GM12878 (cell line): ENCODE measurements at regions of chr10 and their contacts with region 1.

Region 1: DNA sequence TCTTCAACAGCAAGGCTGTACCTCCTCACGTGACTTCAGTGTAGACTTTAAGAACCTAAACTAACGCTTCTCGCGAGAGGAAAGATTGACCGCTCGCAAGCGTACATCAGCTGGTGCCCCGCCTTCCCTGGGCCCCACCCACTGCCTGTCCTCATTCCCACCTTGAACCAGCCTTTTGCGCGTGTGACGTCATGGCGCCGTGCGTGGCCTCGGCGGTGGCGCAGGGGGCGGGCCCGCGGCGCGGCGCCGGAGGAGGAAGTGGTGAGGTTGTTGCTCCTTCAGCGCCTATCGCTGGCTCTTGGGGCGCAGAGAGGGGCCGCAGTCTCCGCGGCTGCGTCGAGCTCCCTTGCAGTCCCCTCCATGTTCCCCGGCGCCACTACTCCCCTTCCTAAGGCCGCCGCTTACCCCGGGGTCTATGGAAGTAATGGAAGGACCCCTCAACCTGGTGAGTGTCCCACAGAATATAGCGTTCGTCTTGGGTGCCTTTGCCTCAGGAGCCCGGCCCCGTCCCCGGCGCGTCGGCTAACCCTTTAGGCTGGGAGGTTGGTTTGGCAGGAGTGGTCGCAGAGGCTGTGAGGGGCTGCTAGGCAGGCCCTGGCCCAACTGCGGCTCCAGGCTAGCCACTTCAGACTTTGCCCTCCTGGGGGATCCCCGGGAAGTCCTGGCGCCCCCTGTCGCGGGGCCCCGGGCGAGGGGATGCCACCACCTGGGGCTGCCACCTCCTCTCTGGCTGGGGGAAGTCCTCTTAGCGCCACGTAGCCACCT is at the start of gene NRBF2:
- DNase-seq: peak; percentile 96
- ATAC-seq: peak; percentile 93
- H3K4me3 ChIP-seq: peak within 1 kb of the TSS; percentile 89
- H3K27ac ChIP-seq: peak within 1 kb of the TSS; percentile 94
- H3K4me1 ChIP-seq: peaks cover 6% of the 10 kb centered on the region
- H3K27me3 ChIP-seq: no peaks in the 10 kb centered on the region
- CTCF ChIP-seq: peak in 2 of 3 experiments; percentile 32 to 42; a peak in 3 of 6 replicates
- EP300 ChIP-seq: no peak
- POLR2A ChIP-seq: peak; percentile 99
- RAD21 ChIP-seq: no peak
- polyA plus RNA-seq, gene NRBF2: 33.2 to 35.0 TPM

Region 2: DNA sequence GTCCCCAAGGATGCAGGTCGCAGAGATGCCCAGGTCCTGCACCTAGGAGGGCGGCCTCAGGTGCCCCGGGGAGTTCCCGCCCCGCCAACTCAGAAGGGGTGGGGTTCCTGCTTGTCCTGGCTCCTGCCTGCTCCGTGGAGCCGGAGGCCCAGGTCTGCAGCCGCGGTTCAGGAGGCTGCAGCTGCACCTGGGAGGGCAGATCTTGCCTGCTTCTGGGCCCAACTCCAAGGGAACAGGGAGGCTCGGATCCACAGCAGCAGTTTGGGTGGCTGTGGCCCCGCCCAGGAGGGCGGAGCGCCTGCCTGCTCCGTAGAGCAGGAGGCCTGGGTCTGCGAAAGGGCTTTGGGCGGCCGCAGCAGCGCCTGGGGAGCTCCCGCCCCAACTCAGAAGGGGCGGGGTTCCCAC is 208.9 kb before region 1 on chr10:
- CTCF ChIA-PET with region 1: no interaction called
- POLR2A ChIA-PET with region 1: no interaction called
- RAD21 ChIA-PET with region 1: no interaction called
- SMC1A ChIA-PET with region 1: no interaction called
- in situ Hi-C with region 1: no loop called
- intact Hi-C with region 1: no loop called
- DNase-seq: no peak
- ATAC-seq: peak; percentile 99
- H3K4me3 ChIP-seq: peak overlapping the region; percentile 49; the same call in 1 of the 2 replicates
- H3K27ac ChIP-seq: no peak overlapping the region
- H3K4me1 ChIP-seq: 0 out of 2 replicates have a peak, but pooled peaks cover 3% of the 10 kb centered on the region
- H3K27me3 ChIP-seq: no peaks in the 10 kb centered on the region
- CTCF ChIP-seq: no peak
- EP300 ChIP-seq: no peak
- POLR2A ChIP-seq: no peak
- RAD21 ChIP-seq: no peak

Region 3: DNA sequence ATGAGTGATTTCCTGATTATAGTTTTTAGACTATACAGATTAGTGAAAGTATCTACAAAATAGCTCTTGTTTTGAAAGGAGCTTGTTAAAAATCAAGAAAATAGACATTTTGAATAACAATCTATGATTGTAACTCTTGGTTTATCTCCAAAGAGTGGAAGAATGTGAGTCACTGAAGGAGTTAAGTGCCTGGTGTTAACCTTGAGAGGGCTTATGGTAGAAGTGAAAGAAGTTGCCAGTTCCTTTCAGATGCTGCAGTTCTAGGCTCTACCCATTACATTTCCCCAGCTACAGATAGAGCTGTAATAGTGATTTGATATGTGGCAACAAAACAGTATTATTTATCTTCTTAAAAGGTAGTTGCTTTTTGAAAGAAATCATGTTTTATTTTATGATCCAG is 12.5 kb after region 1 on chr10:
- CTCF ChIA-PET with region 1: interaction called, 13 read pairs
- POLR2A ChIA-PET with region 1: interaction called, 15 read pairs
- RAD21 ChIA-PET with region 1: interaction called, 15 read pairs
- SMC1A ChIA-PET with region 1: interaction called, 40 read pairs
- in situ Hi-C with region 1: no loop called
- intact Hi-C with region 1: no loop called
- DNase-seq: no peak
- ATAC-seq: peak; percentile 80
- H3K4me3 ChIP-seq: no peak overlapping the region
- H3K27ac ChIP-seq: no peak overlapping the region
- H3K4me1 ChIP-seq: no peaks in the 10 kb centered on the region; the same call in 1 of the 2 replicates
- H3K27me3 ChIP-seq: no peaks in the 10 kb centered on the region
- CTCF ChIP-seq: no peak
- EP300 ChIP-seq: no peak
- POLR2A ChIP-seq: no peak
- RAD21 ChIP-seq: no peak

Region 4: DNA sequence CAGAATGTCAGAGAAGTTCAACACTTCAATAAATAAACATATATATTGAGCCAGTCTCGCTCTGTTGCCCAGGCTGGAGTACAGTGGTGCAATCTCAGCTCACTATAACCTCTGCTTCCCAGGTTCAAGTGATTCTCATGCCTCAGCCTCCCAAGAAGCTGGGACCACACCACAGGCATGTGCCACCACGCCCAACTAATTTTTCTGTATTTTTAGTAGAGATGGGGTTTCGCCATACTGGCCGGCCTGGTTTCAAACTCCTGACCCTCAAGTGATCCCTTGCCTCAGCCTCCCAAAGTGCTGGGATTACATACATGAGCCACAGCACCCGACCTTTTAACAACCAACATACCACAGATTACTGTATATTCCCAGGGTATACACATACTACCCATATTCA is 198.3 kb after region 1 on chr10:
- CTCF ChIA-PET with region 1: no interaction called
- POLR2A ChIA-PET with region 1: no interaction called
- RAD21 ChIA-PET with region 1: no interaction called
- SMC1A ChIA-PET with region 1: no interaction called
- in situ Hi-C with region 1: no loop called
- intact Hi-C with region 1: no loop called
- DNase-seq: no peak
- ATAC-seq: no peak
- H3K4me3 ChIP-seq: no peak overlapping the region
- H3K27ac ChIP-seq: no peak overlapping the region
- H3K4me1 ChIP-seq: no peaks in the 10 kb centered on the region
- H3K27me3 ChIP-seq: no peaks in the 10 kb centered on the region
- CTCF ChIP-seq: no peak
- EP300 ChIP-seq: no peak
- POLR2A ChIP-seq: no peak
- RAD21 ChIP-seq: no peak